ENCODE measurements at regions of chr11 and their contacts with region 1.

Region 1: DNA sequence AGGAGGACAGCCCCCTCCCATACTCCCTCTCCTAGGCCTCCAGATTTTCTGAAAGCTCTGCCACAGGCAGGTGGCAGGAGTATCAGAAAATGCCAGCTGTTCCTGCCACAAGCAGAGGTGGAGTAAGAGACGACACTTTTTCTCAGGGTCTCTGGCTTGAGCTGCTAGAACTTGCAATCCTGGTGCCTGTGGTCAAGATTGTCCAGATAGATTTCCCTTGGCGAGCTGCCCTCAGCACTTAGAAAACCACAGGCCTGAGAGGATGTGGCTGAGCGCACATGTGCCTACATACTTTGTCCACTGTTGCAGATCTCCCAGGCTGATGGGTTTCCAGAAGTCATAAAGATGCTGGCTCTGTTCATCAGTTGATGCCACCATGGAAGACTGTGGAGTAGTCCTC is 65.7 kb upstream of the NAV2 start:
- DNase-seq: peak; percentile 96 to 97
- H3K4me3 ChIP-seq: no peak overlapping the region
- H3K27ac ChIP-seq: peak overlapping the region in 1 of 3 donors; percentile 42
- H3K4me1 ChIP-seq: peaks cover 11 to 28% of the 10 kb centered on the region in 2 donors
- H3K27me3 ChIP-seq: no peaks in the 10 kb centered on the region
- CTCF ChIP-seq: peak in 1 of 6 experiments; percentile 42
- POLR2A ChIP-seq: no peak

Region 2: DNA sequence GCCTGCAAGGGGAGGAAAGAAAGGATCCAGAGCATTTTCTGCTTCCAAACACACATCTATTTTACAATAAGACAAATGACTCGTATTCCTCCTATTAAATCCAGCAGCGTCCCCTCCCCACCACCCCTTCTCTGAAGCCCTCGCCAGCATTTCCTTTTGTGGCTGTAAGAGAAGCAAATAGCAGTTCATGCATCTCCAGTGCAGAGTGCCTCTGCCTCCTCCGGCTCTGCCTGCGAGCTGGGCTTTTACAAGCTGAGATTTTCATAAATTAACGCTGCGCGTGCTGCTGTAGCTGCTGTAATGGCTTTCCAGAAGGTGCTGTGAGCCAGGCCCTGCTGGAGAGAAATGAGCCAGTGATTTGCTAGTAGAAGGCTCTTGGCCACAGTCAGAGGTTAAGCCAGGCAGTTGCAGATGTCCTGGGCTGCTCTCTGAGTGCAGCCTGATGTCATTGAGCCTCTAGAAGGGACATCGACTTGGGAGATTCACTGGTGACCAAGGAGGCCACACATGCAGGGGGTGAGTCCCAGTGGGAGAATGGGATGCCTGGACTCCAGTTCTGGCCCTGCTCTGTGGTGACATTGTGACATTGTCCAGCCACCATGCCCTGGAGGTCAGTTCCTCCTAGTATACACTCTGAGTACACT is 68.8 kb before region 1 on chr11:
- intact Hi-C with region 1: loop called (anchors 10 kb)
- DNase-seq: peak in 1 of 2 donors; percentile 14
- H3K4me3 ChIP-seq: no peak overlapping the region
- H3K27ac ChIP-seq: peak overlapping the region; percentile 66 to 85 (median 83)
- H3K4me1 ChIP-seq: peaks cover 58 to 65% of the 10 kb centered on the region in 2 donors
- H3K27me3 ChIP-seq: no peaks in the 10 kb centered on the region
- CTCF ChIP-seq: no peak
- POLR2A ChIP-seq: no peak

Region 3: DNA sequence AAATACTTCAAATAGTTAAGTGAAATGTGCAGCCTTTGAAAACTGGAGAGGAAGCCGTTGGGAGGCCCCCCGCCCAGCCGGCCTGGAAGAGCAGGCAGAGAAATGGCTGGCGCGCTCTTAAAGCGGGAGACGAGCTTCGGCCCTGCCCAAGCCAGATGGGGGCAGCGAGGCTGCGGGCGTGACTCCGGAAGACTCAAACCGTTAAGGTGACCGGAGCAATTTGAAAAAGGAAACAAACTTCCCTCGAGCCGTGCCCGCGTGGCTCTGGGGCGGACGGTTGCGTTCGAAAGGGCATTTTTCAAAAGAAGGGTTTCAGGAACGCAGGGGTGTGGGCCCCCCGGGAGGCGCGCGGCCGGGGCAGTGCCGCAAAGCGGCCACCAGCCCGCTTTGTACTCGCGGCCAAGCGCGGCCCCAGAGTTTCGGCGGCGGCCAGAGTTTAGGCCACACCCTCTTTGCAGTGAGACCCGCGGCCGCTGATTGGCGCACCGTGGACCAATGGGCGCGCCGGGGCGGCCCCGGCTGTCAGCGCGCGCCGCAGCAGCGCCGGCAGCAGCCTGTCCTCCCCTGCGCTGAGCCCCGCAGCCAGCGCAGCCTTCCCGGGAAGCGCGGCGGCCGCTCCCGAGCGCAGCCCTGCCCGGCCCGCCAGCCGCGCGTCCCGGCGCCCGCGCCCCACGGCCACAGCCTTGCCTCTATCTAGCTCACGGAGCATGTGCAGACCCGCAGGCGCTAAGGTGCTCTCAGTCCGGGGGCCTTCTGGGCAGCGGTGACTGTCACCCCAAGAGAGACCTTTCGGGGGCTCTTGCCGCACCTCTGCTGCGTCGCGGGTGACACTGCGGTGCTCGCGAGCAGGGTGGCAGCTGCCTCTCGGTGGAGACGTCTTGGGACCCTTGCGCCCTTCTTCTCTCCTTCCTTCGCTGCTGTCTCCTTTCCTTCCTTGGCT is 65.6 kb after region 1 on chr11 and contains the start of gene NAV2:
- intact Hi-C with region 1: no loop called
- DNase-seq: peak; percentile 95 to 96
- H3K4me3 ChIP-seq: peak within 1 kb of the TSS; percentile 39 to 80 (median 62)
- H3K27ac ChIP-seq: peak within 1 kb of the TSS; percentile 96 to 99 (median 96)
- H3K4me1 ChIP-seq: peaks cover 31 to 40% of the 10 kb centered on the region in 2 donors
- H3K27me3 ChIP-seq: no peaks in the 10 kb centered on the region
- CTCF ChIP-seq: peak in 2 of 6 experiments; percentile 6 to 18
- POLR2A ChIP-seq: peak; percentile 95 to 100
- total RNA-seq, gene NAV2: 34.8 to 88.6 (median 54.5) TPM

Region 4: DNA sequence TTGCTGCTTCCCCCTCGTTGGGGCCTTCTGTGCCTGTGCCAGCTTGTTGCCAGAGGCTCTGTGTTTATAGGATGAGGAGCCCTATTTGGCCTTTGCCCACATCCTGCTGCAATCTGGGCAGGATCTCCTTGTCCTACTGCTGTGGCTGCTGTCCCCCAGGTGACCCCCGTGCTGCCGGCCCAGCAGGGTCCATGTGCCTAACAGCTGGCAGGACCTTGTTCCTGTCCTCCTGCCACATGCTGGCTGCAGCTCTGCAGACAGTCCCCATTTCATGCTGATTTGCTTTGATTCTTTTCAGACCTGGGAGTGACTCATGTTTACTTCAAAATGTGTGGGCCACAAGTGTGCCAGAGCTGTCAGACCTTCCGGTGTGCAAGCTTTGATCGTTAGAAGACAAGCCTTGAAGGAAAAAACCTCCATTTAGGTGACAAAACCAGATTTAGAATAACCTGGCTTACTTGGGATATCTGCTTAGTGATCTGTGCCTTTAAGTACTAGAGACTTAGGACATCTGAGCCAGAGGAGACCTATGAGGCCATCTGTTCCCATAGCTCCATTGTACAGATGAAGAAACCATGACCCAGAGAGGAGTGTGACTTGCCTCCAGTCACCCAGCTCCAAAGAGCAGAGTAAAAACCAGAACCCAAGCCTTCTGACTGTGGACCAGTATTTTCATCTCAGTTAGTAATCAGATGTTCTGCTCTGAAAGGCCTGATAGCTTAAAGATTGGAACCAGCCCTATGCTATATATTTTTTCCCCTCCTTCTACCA is 76.8 kb after region 1 on chr11:
- intact Hi-C with region 1: no loop called
- DNase-seq: peak in 1 of 2 donors; percentile 46
- H3K4me3 ChIP-seq: no peak overlapping the region
- H3K27ac ChIP-seq: peak overlapping the region; percentile 93 to 98 (median 96)
- H3K4me1 ChIP-seq: peaks cover 42 to 55% of the 10 kb centered on the region in 2 donors
- H3K27me3 ChIP-seq: no peaks in the 10 kb centered on the region
- CTCF ChIP-seq: no peak
- POLR2A ChIP-seq: no peak

Measured in thyroid gland (tissue), 4 donors.